ENCODE measurements at regions of chr12 and their contacts with region 1.

Region 1: GRCh38 chr12:104986022-104986941 is at the start of gene NOPCHAP1:
- H3K4me3 ChIP-seq: peak within 1 kb of the TSS; percentile 92
- H3K27ac ChIP-seq: peak within 1 kb of the TSS; percentile 24; the same call in 1 of the 2 replicates
- H3K4me1 ChIP-seq: no peaks in the 10 kb centered on the region
- CTCF ChIP-seq: no peak

Region 2: DNA sequence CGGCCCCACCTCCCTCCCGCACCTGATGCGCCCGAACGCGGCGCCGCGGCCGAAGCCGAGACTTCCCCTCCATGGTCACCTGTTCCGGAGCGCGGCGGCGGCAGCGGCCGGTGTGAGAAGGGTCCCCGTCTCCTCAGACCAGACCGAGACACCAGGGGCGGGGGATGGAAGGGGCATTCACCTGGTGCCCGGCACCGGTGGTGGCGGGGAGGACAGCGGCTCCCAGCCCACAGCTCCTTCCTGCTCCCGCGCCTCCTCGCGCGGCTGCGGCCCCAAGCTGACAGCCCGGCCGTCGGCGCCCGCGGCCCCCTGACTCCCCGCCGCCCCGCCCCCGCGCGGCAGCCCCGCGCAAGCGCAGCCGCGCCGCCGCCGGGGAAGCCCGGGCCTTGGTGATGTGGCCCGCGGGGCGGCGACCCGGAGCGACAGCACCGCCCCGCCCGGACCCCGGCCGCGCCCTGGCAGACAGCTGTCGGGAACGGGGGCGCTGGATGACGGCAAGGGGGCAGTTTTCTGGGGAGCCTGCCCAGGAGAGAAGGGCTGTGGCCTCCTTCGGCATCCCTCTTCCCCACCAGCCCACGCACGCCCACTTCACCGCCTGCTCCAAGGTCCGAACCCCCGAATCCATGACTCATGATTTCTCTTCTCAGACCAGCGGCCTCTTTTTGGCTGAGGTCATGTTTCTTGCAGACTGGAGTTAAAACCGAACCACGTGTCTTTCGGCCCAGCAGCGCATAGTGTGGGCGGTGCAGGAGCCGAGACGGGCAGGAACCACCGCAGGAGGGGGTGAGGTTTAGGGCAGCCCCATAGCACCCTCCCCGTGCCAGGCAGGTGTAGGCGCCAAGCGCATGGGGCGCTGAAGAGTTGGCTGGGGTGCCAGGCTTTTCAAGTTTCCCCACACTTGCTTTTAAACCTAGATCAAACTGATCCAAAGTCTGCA is 28.0 kb before region 1 on chr12 and contains the start of gene SLC41A2:
- CTCF ChIA-PET with region 1: interaction called, 3 read pairs
- POLR2A ChIA-PET with region 1: interaction called, 12 read pairs
- H3K4me3 ChIP-seq: peak within 1 kb of the TSS; percentile 94
- H3K27ac ChIP-seq: peak within 1 kb of the TSS; percentile 85
- H3K4me1 ChIP-seq: peaks cover 20% of the 10 kb centered on the region
- CTCF ChIP-seq: peak; percentile 79